GM23248 (cell line): ENCODE measurements at regions of chr17 and their contacts with region 1.

Region 1: GRCh38 chr17:10549096-10549842 is at the start of gene MYH2:
- DNase-seq: peak; percentile 6
- H3K4me3 ChIP-seq: no peak within 1 kb of the TSS
- H3K27ac ChIP-seq: no peak within 1 kb of the TSS
- H3K4me1 ChIP-seq: no peaks in the 10 kb centered on the region
- H3K27me3 ChIP-seq: no peaks in the 10 kb centered on the region
- total RNA-seq, gene MYH2: 0.65 and 1.5 TPM in 2 replicates

Region 2: DNA sequence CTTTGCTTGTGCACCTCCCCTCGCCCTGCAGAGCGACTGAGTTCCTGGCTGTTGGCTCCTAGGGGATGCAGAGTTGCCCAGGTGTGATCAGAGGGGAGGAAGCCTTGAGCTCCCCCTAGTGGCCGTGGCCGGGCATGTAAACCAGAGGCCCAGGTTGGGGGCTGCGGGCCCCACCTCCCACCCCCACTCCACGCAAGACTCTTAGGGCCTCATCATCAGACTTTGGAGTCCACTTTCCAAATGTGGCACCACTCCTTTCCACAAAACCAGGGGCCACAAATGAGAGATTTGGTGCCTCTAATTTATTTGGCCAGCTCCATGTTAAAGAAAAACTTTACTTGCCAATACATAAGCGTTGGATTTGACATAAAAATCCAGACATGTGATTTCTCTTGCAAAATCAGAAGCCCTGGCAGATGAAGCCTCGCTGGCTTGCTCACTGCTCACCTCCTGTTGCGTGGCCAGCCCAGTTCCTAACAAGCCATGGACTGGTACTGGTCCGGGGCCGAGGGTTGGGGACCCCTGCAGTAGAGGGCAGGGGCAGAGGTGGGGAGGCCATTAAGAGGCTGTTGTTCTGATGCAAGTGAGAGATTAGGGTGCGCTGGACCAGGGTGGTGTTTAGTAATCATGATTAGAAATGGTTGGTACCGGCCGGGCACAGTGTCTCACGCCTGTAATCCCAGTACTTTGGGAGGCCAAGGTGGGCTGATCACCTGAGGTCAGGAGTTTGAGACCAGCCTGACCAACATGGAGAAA is 322.2 kb before region 1 on chr17:
- in situ Hi-C with region 1: no loop called
- DNase-seq: peak; percentile 48
- H3K4me3 ChIP-seq: no peak overlapping the region
- H3K27ac ChIP-seq: no peak overlapping the region
- H3K4me1 ChIP-seq: no peaks in the 10 kb centered on the region
- H3K27me3 ChIP-seq: no peaks in the 10 kb centered on the region

Region 3: GRCh38 chr17:10600571-10600970 is 51.3 kb after region 1 on chr17:
- in situ Hi-C with region 1: loop called (anchors 10 kb)
- DNase-seq: peak; percentile 63
- H3K4me3 ChIP-seq: no peak overlapping the region
- H3K27ac ChIP-seq: no peak overlapping the region
- H3K4me1 ChIP-seq: peaks cover 15% of the 10 kb centered on the region
- H3K27me3 ChIP-seq: no peaks in the 10 kb centered on the region

Region 4: DNA sequence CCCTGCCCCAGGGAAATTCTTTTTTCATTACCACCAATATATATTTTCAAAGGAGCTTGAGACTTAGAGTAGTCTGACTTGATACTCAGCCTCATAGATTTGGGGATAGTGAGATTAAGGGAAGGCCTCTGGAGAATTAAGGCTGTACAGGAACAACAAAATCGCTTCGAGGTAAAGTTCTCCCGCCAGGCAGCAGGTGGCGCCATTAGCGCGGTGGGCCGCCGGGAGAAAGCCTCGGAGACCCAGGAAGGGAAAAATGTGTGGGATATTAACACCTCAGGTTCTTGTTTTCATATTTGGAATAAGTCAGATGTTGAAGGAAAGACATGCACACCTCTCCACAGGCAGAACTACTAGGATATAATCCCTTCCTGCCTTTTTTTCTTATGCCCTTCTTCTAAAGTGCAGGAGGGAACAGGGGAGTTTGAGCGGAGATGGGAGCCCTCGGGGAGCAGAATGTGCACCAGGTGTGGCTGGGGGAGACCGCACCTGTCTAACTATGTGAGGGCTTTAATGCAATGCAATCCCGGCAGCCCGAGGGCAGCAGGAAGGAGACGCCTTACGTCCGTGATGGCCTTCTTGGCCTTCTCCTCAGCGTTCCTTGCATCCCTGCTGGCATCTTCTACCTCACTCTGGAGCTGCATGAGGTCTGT is 81.9 kb after region 1 on chr17:
- in situ Hi-C with region 1: no loop called
- DNase-seq: peak; percentile 52
- H3K4me3 ChIP-seq: no peak overlapping the region
- H3K27ac ChIP-seq: no peak overlapping the region
- H3K4me1 ChIP-seq: no peaks in the 10 kb centered on the region
- H3K27me3 ChIP-seq: no peaks in the 10 kb centered on the region

Region 5: DNA sequence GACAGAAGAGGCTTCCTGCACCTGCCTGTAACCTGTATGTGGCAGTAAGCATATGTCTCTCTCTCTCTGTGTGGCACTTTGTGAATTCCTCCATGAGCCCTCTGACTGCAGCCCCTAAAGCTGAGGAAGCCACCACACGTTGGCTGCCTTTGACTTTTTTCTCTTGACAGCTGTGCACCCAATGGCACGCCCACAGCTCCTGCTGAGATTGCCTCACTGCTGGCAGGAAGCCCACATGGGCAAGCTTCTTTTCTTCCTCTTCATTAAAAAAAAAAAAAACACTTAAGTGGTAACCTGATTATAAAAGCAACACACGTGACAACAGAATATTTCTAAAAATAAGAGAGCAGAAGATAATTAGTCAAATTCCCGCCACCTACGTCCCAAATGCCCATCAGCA is 322.6 kb after region 1 on chr17:
- in situ Hi-C with region 1: no loop called
- DNase-seq: no peak
- H3K4me3 ChIP-seq: no peak overlapping the region
- H3K27ac ChIP-seq: no peak overlapping the region
- H3K4me1 ChIP-seq: no peaks in the 10 kb centered on the region
- H3K27me3 ChIP-seq: no peaks in the 10 kb centered on the region